MCF 10A (cell line): ENCODE measurements at regions of chr1 and their contacts with region 1.

Region 1: GRCh38 chr1:99481391-99481996 is 164.4 kb upstream of the PALMD start:
- DNase-seq: peak; percentile 72
- H3K4me3 Mint-ChIP-seq: no peak overlapping the region
- H3K27ac Mint-ChIP-seq: no peak overlapping the region
- H3K4me1 Mint-ChIP-seq: no peaks in the 10 kb centered on the region
- H3K27me3 Mint-ChIP-seq: no peaks in the 10 kb centered on the region
- CTCF ChIP-seq: peak; percentile 74

Region 2: GRCh38 chr1:98794196-98794886 is 687.2 kb before region 1 on chr1:
- CTCF ChIA-PET with region 1: interaction called, 32 read pairs
- POLR2A ChIA-PET with region 1: no interaction called
- intact Hi-C with region 1: loop called (anchors 1 kb)
- DNase-seq: peak; percentile 79
- H3K4me3 Mint-ChIP-seq: no peak overlapping the region
- H3K27ac Mint-ChIP-seq: no peak overlapping the region
- H3K4me1 Mint-ChIP-seq: peaks cover 5% of the 10 kb centered on the region
- H3K27me3 Mint-ChIP-seq: no peaks in the 10 kb centered on the region
- CTCF ChIP-seq: peak; percentile 72

Region 3: GRCh38 chr1:99180343-99180808 is 301.1 kb before region 1 on chr1:
- CTCF ChIA-PET with region 1: interaction called, 128 read pairs
- POLR2A ChIA-PET with region 1: interaction called, 7 read pairs
- intact Hi-C with region 1: loop called (anchors 1 kb)
- DNase-seq: peak; percentile 79
- H3K4me3 Mint-ChIP-seq: no peak overlapping the region
- H3K27ac Mint-ChIP-seq: no peak overlapping the region
- H3K4me1 Mint-ChIP-seq: no peaks in the 10 kb centered on the region
- H3K27me3 Mint-ChIP-seq: no peaks in the 10 kb centered on the region
- CTCF ChIP-seq: peak; percentile 70

Region 4: GRCh38 chr1:99496067-99496466 is 14.6 kb after region 1 on chr1:
- CTCF ChIA-PET with region 1: interaction called, 11 read pairs
- POLR2A ChIA-PET with region 1: interaction called, 4 read pairs
- intact Hi-C with region 1: no loop called
- DNase-seq: peak; percentile 77
- H3K4me3 Mint-ChIP-seq: no peak overlapping the region
- H3K27ac Mint-ChIP-seq: peak overlapping the region; percentile 46
- H3K4me1 Mint-ChIP-seq: peaks cover 15% of the 10 kb centered on the region
- H3K27me3 Mint-ChIP-seq: no peaks in the 10 kb centered on the region
- CTCF ChIP-seq: no peak

Region 5: GRCh38 chr1:99580451-99580850 is 99.0 kb after region 1 on chr1:
- CTCF ChIA-PET with region 1: interaction called, 10 read pairs
- POLR2A ChIA-PET with region 1: no interaction called
- intact Hi-C with region 1: no loop called
- DNase-seq: peak; percentile 90
- H3K4me3 Mint-ChIP-seq: peak overlapping the region; percentile 33
- H3K27ac Mint-ChIP-seq: peak overlapping the region; percentile 96
- H3K4me1 Mint-ChIP-seq: peaks cover 20% of the 10 kb centered on the region
- H3K27me3 Mint-ChIP-seq: no peaks in the 10 kb centered on the region
- CTCF ChIP-seq: no peak

Region 6: DNA sequence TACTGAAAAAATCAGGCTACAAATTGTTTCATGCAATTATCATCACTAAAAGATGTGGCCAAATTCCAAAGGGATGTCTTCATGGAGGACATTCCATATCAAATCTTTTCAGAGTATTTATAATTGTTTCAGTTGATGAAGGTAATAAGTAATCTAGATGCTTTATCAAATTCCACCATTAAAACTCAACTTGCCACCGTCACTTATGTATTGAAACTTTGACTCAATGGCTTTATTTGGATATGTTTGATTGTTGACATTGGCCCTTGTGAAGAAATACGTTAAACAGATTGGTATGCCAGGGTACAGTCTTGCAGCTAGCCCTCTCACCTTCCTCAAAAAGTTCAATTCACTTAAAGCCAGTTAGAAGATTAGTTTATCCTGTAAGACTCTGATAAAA is 132.2 kb after region 1 on chr1:
- CTCF ChIA-PET with region 1: no interaction called
- POLR2A ChIA-PET with region 1: no interaction called
- intact Hi-C with region 1: no loop called
- DNase-seq: no peak
- H3K4me3 Mint-ChIP-seq: no peak overlapping the region
- H3K27ac Mint-ChIP-seq: no peak overlapping the region
- H3K4me1 Mint-ChIP-seq: no peaks in the 10 kb centered on the region
- H3K27me3 Mint-ChIP-seq: no peaks in the 10 kb centered on the region
- CTCF ChIP-seq: no peak

Region 7: GRCh38 chr1:99685516-99686180 is 204.2 kb after region 1 on chr1:
- CTCF ChIA-PET with region 1: interaction called, 30 read pairs
- POLR2A ChIA-PET with region 1: no interaction called
- intact Hi-C with region 1: no loop called
- DNase-seq: peak; percentile 92
- H3K4me3 Mint-ChIP-seq: no peak overlapping the region
- H3K27ac Mint-ChIP-seq: no peak overlapping the region
- H3K4me1 Mint-ChIP-seq: peaks cover 24% of the 10 kb centered on the region
- H3K27me3 Mint-ChIP-seq: no peaks in the 10 kb centered on the region
- CTCF ChIP-seq: peak; percentile 54